ENCODE measurements at regions of chr12 and their contacts with region 1.

Region 1: GRCh38 chr12:111812881-111813741 is 28.9 kb upstream of the MAPKAPK5 start:
- DNase-seq: peak; percentile 76 to 79
- H3K4me3 ChIP-seq: no peak overlapping the region
- H3K4me3 Mint-ChIP-seq: no peak overlapping the region
- H3K27ac Mint-ChIP-seq: peak overlapping the region; percentile 46
- H3K4me1 ChIP-seq: peaks cover 6% of the 10 kb centered on the region; the same call in 1 of the 2 replicates
- H3K4me1 Mint-ChIP-seq: peaks cover 17% of the 10 kb centered on the region
- H3K27me3 ChIP-seq: no peaks in the 10 kb centered on the region
- H3K27me3 Mint-ChIP-seq: no peaks in the 10 kb centered on the region
- CTCF ChIP-seq: peak; percentile 72 to 77

Region 2: DNA sequence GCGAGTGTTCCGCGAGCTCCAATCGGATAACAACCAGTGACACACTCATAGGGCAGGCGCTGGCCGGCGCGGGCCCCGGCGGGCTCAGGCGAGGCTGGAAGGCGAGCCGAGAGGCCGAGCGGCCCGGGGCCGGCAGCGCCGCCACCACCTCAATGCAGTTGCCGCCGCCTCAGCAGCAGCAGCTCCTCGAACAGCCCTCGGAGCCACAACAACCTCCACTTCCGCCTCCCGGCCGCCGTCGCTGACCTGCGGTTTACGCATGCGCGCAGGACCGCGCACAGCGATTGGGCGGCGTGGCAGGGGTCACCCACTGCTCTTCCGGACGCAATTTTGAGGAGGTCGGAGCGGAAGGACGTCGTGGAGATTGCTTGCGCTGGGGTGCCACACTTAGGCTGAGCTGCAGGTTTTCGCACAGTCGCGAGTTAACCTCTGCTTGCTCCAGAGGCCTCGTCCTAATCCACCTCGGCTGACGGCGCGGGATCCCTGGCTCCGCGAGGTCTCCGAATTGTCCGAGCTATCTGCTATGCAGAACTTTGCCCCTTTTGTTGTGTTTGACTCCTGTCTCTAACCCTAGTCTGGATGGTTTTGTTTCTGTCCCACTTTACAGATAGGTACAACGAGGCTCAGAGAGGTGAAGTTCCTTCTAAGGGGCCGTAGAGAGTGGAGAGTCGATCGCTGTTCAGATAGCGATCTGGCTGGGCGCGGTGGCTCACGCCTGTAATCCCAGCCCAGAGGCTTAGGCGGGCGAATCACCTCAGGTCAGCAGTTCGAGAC is 127.2 kb before region 1 on chr12 and contains the starts of genes ACAD10 and BRAP:
- CTCF ChIA-PET with region 1: interaction called, 7 read pairs
- POLR2A ChIA-PET with region 1: no interaction called
- intact Hi-C with region 1: loop called (anchors 2 kb)
- DNase-seq: peak; percentile 95 to 96
- H3K4me3 ChIP-seq: peak within 1 kb of the TSS; percentile 71
- H3K4me3 Mint-ChIP-seq: peak within 1 kb of the TSS; percentile 92
- H3K27ac Mint-ChIP-seq: peak within 1 kb of the TSS; percentile 95
- H3K4me1 ChIP-seq: peaks cover 9% of the 10 kb centered on the region; the same call in 1 of the 2 replicates
- H3K4me1 Mint-ChIP-seq: peaks cover 21% of the 10 kb centered on the region
- H3K27me3 ChIP-seq: no peaks in the 10 kb centered on the region
- H3K27me3 Mint-ChIP-seq: no peaks in the 10 kb centered on the region
- CTCF ChIP-seq: no peak
- total RNA-seq, gene ACAD10: 19.0 and 26.1 TPM in 2 replicates
- total RNA-seq, gene BRAP: 24.4 and 24.6 TPM in 2 replicates

Region 3: GRCh38 chr12:111715279-111715678 is 97.8 kb before region 1 on chr12:
- CTCF ChIA-PET with region 1: no interaction called
- POLR2A ChIA-PET with region 1: no interaction called
- intact Hi-C with region 1: no loop called
- DNase-seq: peak in 1 of 2 experiments; percentile 26
- H3K4me3 ChIP-seq: no peak overlapping the region
- H3K4me3 Mint-ChIP-seq: no peak overlapping the region
- H3K27ac Mint-ChIP-seq: peak overlapping the region; percentile 50
- H3K4me1 ChIP-seq: no peaks in the 10 kb centered on the region
- H3K4me1 Mint-ChIP-seq: no peaks in the 10 kb centered on the region
- H3K27me3 ChIP-seq: no peaks in the 10 kb centered on the region
- H3K27me3 Mint-ChIP-seq: no peaks in the 10 kb centered on the region
- CTCF ChIP-seq: no peak

Region 4: GRCh38 chr12:111753144-111753881 is 59.8 kb before region 1 on chr12:
- CTCF ChIA-PET with region 1: interaction called, 33 read pairs
- POLR2A ChIA-PET with region 1: interaction called, 6 read pairs
- intact Hi-C with region 1: loop called (anchors 1 kb)
- DNase-seq: peak; percentile 70 to 77
- H3K4me3 ChIP-seq: no peak overlapping the region
- H3K4me3 Mint-ChIP-seq: no peak overlapping the region
- H3K27ac Mint-ChIP-seq: no peak overlapping the region
- H3K4me1 ChIP-seq: no peaks in the 10 kb centered on the region
- H3K4me1 Mint-ChIP-seq: no peaks in the 10 kb centered on the region
- H3K27me3 ChIP-seq: no peaks in the 10 kb centered on the region
- H3K27me3 Mint-ChIP-seq: no peaks in the 10 kb centered on the region
- CTCF ChIP-seq: peak; percentile 83 to 89

Region 5: GRCh38 chr12:111766608-111767361 is 46.3 kb before region 1 on chr12 and contains the start of gene ALDH2:
- CTCF ChIA-PET with region 1: interaction called, 11 read pairs
- POLR2A ChIA-PET with region 1: interaction called, 5 read pairs
- intact Hi-C with region 1: loop called (anchors 1 kb)
- DNase-seq: peak; percentile 85 to 90
- H3K4me3 ChIP-seq: peak within 1 kb of the TSS; percentile 67
- H3K4me3 Mint-ChIP-seq: peak within 1 kb of the TSS; percentile 96
- H3K27ac Mint-ChIP-seq: peak within 1 kb of the TSS; percentile 91
- H3K4me1 ChIP-seq: peaks cover 17% of the 10 kb centered on the region
- H3K4me1 Mint-ChIP-seq: peaks cover 14% of the 10 kb centered on the region
- H3K27me3 ChIP-seq: no peaks in the 10 kb centered on the region
- H3K27me3 Mint-ChIP-seq: no peaks in the 10 kb centered on the region
- CTCF ChIP-seq: peak in 1 of 2 experiments; percentile 31
- total RNA-seq, gene ALDH2: 170 and 196 TPM in 2 replicates

Region 6: DNA sequence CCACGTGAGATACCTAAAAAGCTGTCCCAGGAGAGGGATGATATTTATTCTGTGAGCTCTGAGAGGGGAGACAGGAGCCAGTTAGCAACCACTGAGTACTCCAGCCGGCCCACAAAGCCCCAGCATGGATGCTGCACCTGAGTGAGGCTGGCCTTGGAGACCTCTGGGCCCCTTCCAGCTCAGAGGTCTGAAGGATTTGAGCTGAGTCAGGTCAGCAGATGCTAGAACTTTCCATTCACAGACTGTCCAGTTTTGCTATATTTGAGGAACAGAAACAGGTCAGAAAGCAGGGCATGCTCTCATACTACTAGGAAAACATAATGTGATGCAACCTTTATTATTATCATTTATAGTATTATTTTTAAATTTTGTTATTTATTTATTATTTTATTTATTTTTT is 13.9 kb after region 1 on chr12:
- CTCF ChIA-PET with region 1: interaction called, 4 read pairs
- POLR2A ChIA-PET with region 1: interaction called, 12 read pairs
- intact Hi-C with region 1: no loop called
- DNase-seq: no peak
- H3K4me3 ChIP-seq: no peak overlapping the region
- H3K4me3 Mint-ChIP-seq: no peak overlapping the region
- H3K27ac Mint-ChIP-seq: no peak overlapping the region
- H3K4me1 ChIP-seq: peaks cover 22% of the 10 kb centered on the region
- H3K4me1 Mint-ChIP-seq: no peaks in the 10 kb centered on the region
- H3K27me3 ChIP-seq: no peaks in the 10 kb centered on the region
- H3K27me3 Mint-ChIP-seq: no peaks in the 10 kb centered on the region
- CTCF ChIP-seq: no peak

Measured in Caco-2 (cell line).